Heart left ventricle (tissue), 16 donors: ENCODE measurements at regions of chr18 and their contacts with region 1.

Region 1: GRCh38 chr18:50644810-50645209 is 84.9 kb downstream of the MAPK4 start:
- DNase-seq: no peak
- ATAC-seq: peak in 2 of 4 donors; percentile 15 to 23
- H3K4me3 ChIP-seq: no peak overlapping the region
- H3K27ac ChIP-seq: no peak overlapping the region
- H3K4me1 ChIP-seq: peaks cover 0 to 12% (median 4%) of the 10 kb centered on the region in 12 donors
- H3K27me3 ChIP-seq: no peaks in the 10 kb centered on the region
- CTCF ChIP-seq: peak in 6 of 12 donors; percentile 9 to 41 (median 25)
- POLR2A ChIP-seq: no peak

Region 2: GRCh38 chr18:50170004-50170403 is 474.8 kb before region 1 on chr18:
- intact Hi-C with region 1: loop called in 1 of 10 experiments (anchors 10 kb)
- DNase-seq: no peak
- ATAC-seq: no peak
- H3K4me3 ChIP-seq: no peak overlapping the region
- H3K27ac ChIP-seq: no peak overlapping the region
- H3K4me1 ChIP-seq: no peaks in the 10 kb centered on the region
- H3K27me3 ChIP-seq: peaks cover 0 to 7% (median 0%) of the 10 kb centered on the region in 9 donors
- CTCF ChIP-seq: no peak
- POLR2A ChIP-seq: no peak

Region 3: DNA sequence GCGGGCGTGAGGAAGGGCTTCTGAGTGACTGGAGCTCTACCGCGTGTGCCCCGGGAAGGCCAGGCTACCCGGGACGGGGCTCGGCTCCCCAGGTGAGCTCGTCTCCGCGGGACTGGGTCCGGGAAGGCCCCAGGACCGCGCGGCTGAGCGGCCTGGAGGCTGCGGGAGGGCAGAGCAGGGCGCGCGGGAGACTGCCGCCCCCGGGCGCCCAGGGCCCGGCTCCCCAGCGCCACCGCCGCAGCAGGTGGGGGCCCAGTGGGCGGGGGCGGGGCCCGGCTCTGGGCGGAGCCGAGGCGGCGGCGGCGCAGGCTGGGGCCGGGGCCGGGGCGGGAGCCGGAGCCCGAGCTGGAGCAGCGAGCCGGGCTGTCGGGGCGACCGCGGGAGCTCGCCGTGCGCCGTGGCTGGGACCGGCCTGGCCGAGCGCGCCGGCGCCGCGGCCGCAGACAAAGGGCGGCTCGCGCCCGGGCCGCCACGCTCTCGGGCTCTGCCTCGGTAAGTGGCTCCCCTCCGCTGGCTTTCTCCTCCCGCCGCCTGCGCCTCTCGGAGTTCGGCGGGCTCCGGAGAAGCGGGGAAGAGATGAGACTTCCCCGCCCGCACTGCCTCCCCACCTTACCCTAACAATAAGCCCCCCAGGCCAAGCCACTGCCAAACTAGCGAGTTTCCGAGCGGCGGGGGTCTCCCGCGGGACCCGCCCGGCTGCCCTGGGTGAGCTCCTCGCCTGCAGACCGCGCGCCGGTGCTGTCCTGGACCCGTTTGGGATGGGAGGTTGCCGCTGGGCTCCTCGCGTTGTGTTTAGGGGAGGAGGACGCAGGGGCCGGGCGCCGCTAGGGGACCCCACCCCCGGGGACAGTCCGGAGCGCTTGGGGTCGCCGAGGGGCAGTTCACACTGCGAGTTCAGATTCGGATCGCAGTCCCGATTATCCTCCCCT is 84.8 kb before region 1 on chr18 and contains the start of gene MAPK4:
- intact Hi-C with region 1: loop called in 1 of 10 experiments (anchors 10 kb)
- DNase-seq: peak; percentile 47 to 71 (median 53)
- ATAC-seq: peak; percentile 63 to 92 (median 86)
- H3K4me3 ChIP-seq: peak within 1 kb of the TSS; percentile 38 to 93 (median 66)
- H3K27ac ChIP-seq: peak within 1 kb of the TSS in 10 of 12 donors; percentile 20 to 87 (median 73)
- H3K4me1 ChIP-seq: peaks cover 0 to 22% (median 10%) of the 10 kb centered on the region in 12 donors
- H3K27me3 ChIP-seq: peaks cover 0 to 69% (median 15%) of the 10 kb centered on the region in 9 donors
- CTCF ChIP-seq: no peak
- POLR2A ChIP-seq: peak in 1 of 2 donors; percentile 11
- total RNA-seq, gene MAPK4: 18.6 to 169 (median 30.1) TPM